B cell (primary cell): ENCODE measurements at regions of chr9 and their contacts with region 1.

Region 1: GRCh38 chr9:38371495-38371894 is 21.0 kb upstream of the ALDH1B1 start:
- DNase-seq: peak; percentile 13
- ATAC-seq: peak; percentile 28
- H3K4me3 ChIP-seq: no peak overlapping the region
- H3K4me3 Mint-ChIP-seq: no peak overlapping the region
- H3K27ac ChIP-seq: no peak overlapping the region
- H3K27ac Mint-ChIP-seq: no peak overlapping the region
- H3K4me1 ChIP-seq: no peaks in the 10 kb centered on the region
- H3K4me1 Mint-ChIP-seq: no peaks in the 10 kb centered on the region
- H3K27me3 ChIP-seq: peaks cover 0 to 8% (median 2%) of the 10 kb centered on the region in 4 experiments
- H3K27me3 Mint-ChIP-seq: peaks cover 12% of the 10 kb centered on the region
- CTCF ChIP-seq: no peak

Region 2: GRCh38 chr9:38432922-38433510 is 61.5 kb after region 1 on chr9:
- CTCF ChIA-PET with region 1: no interaction called
- POLR2A ChIA-PET with region 1: no interaction called
- intact Hi-C with region 1: loop called (anchors 1 kb)
- DNase-seq: peak; percentile 52
- ATAC-seq: no peak
- H3K4me3 ChIP-seq: no peak overlapping the region
- H3K4me3 Mint-ChIP-seq: no peak overlapping the region
- H3K27ac ChIP-seq: no peak overlapping the region
- H3K27ac Mint-ChIP-seq: no peak overlapping the region
- H3K4me1 ChIP-seq: peaks cover 0 to 6% of the 10 kb centered on the region in 2 donors
- H3K4me1 Mint-ChIP-seq: no peaks in the 10 kb centered on the region
- H3K27me3 ChIP-seq: peaks cover 0 to 16% (median 0%) of the 10 kb centered on the region in 4 experiments
- H3K27me3 Mint-ChIP-seq: peaks cover 29% of the 10 kb centered on the region
- CTCF ChIP-seq: peak; percentile 78